ENCODE measurements at regions of chr9 and their contacts with region 1.

Region 1: GRCh38 chr9:88388172-88388885 is at the start of gene SPIN1:
- DNase-seq: peak; percentile 86
- H3K4me3 Mint-ChIP-seq: peak within 1 kb of the TSS; percentile 94
- H3K27ac Mint-ChIP-seq: peak within 1 kb of the TSS; percentile 95
- H3K4me1 Mint-ChIP-seq: peaks cover 17% of the 10 kb centered on the region
- H3K27me3 Mint-ChIP-seq: no peaks in the 10 kb centered on the region
- CTCF ChIP-seq: no peak
- total RNA-seq, gene SPIN1: 56.7 and 59.5 TPM in 2 replicates

Region 2: GRCh38 chr9:88106491-88106890 is 281.8 kb before region 1 on chr9:
- CTCF ChIA-PET with region 1: no interaction called
- intact Hi-C with region 1: loop called (anchors 5 kb)
- DNase-seq: peak; percentile 31
- H3K4me3 Mint-ChIP-seq: no peak overlapping the region
- H3K27ac Mint-ChIP-seq: peak overlapping the region; percentile 36
- H3K4me1 Mint-ChIP-seq: no peaks in the 10 kb centered on the region
- H3K27me3 Mint-ChIP-seq: peaks cover 27% of the 10 kb centered on the region
- CTCF ChIP-seq: no peak

Region 3: DNA sequence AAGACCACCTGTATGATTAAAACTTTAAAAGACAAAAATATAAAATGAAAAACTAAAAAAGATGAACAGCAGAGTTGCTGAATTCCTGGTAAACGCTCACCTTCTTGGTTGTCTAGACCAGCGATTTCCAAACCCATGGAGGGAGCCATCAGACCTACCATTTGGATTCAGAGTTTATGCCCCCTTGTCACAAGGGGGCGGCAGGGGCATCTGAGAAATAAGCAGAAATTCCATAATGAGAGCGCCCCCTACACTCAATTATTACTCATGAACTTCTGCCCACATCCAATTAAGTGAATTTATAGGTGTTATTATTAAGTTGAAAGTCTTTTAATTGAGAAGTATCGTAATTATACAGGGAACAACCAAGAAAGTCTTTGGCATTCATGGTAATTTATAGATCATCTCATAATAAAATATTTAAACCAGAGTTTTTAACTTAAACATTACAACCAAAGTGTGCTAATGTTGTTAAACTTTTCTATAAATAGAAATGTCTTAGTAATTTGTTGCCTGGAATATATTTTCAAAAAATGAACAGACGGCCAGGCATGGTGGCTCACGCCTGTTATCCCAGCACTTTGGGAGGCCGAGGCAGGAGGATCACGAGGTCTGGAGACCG is 214.8 kb before region 1 on chr9:
- CTCF ChIA-PET with region 1: no interaction called
- intact Hi-C with region 1: loop called (anchors 5 kb)
- DNase-seq: peak; percentile 68
- H3K4me3 Mint-ChIP-seq: no peak overlapping the region
- H3K27ac Mint-ChIP-seq: no peak overlapping the region
- H3K4me1 Mint-ChIP-seq: no peaks in the 10 kb centered on the region
- H3K27me3 Mint-ChIP-seq: no peaks in the 10 kb centered on the region
- CTCF ChIP-seq: peak; percentile 83

Region 4: GRCh38 chr9:88197781-88198340 is 190.5 kb before region 1 on chr9:
- CTCF ChIA-PET with region 1: no interaction called
- intact Hi-C with region 1: loop called (anchors 5 kb)
- DNase-seq: peak; percentile 13
- H3K4me3 Mint-ChIP-seq: peak overlapping the region; percentile 9
- H3K27ac Mint-ChIP-seq: peak overlapping the region; percentile 95
- H3K4me1 Mint-ChIP-seq: peaks cover 42% of the 10 kb centered on the region
- H3K27me3 Mint-ChIP-seq: no peaks in the 10 kb centered on the region
- CTCF ChIP-seq: no peak